ENCODE measurements at regions of chr10 and their contacts with region 1.

Region 1: DNA sequence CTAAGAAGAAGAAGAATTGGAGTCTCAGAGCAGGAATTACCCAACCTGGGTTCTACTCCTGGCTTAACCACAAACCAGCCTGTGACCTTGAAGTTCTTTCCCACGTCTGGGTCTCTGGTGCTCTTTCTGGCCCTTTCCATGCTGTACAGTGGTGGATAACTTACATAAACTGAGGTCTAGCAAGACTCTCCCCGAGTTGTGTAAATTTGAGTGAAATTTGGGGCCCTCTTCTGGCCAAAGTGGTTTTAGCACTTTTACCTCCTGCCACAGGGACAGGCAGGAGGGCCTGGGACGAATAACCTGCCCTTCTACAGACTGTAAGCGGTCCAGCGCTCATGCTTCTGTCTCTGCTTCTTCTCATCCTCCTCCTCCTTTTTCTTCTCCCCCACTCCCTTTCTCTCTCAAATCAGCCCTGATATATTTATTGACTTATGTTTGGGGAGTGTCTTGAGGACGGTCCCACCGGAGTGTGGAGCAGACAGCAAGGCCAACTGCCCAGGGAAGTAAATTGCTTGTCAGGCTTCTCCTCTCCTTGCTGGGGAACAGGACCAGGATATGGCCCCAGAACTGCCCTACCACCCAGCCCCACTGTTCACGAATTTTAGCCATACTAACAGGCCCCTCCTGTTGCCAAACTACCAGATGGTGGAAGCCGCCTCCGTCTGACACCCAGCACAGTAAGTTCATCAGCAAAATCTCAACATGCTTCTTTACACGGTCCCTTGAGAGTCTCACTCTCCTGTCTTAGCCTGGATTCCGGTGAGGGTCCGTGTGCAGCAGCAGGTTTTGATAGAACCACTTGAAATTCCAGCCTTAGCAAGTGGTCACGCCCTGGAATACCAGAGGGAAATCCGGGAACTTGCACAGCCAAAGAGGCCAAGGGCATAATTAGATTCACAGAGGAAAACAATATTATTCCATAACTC is 4.0 kb upstream of the SH3PXD2A start:
- DNase-seq: peak; percentile 46 to 84
- H3K4me3 ChIP-seq: no peak overlapping the region
- H3K27ac ChIP-seq: no peak overlapping the region
- H3K4me1 ChIP-seq: peaks cover 0 to 6% (median 3%) of the 10 kb centered on the region in 4 experiments; a peak in 5 of 7 replicates
- H3K27me3 ChIP-seq: peaks cover 0 to 21% (median 15%) of the 10 kb centered on the region in 4 experiments; a peak in 5 of 7 replicates
- CTCF ChIP-seq: peak; percentile 39 to 77 (median 77)
- EP300 ChIP-seq: no peak
- POLR2A ChIP-seq: no peak
- RAD21 ChIP-seq: peak; percentile 73 to 84

Region 2: DNA sequence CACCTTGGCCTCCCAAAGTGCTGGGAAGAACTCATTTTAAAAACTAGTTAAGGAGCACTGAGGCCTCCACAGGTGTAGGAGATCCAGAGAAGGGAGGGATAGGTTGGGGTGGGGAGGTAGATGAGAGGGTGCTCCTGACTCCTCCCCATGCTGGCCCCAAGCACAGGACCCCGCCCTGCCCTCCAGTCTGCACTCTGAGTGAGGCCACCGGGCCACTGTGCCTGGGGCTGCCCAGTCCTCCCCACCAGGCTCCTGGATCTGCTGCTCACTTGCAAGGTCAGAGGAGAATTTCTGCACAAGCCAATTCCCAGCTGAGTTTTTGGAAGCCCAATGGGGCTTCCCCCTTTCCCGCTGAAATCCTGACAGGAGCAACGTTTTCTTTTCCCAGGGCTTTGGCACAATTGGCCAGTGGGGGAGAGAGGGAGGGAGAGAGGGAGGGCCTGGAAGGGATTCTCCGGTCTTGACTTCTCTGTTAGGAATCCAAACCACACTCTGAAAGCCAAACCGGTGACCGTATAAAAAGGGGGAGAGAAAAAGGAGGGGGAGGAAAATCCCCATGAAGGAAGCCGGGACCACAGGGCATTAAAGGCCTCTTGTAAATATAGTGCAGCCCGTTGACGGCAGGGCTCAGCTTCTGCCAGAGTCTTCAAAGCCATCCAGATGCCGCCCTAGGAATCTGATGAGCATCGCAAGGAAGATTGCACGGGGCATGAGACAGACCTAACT is 120.2 kb before region 1 on chr10:
- CTCF ChIA-PET with region 1: interaction called, 13 read pairs
- POLR2A ChIA-PET with region 1: interaction called, 4 read pairs
- DNase-seq: no peak
- H3K4me3 ChIP-seq: peak overlapping the region in 1 of 4 experiments; percentile 8; a peak in 2 of 8 replicates
- H3K27ac ChIP-seq: no peak overlapping the region
- H3K4me1 ChIP-seq: peaks cover 0 to 9% (median 2%) of the 10 kb centered on the region in 4 experiments; a peak in 3 of 7 replicates
- H3K27me3 ChIP-seq: no peaks in the 10 kb centered on the region
- CTCF ChIP-seq: no peak
- EP300 ChIP-seq: no peak
- POLR2A ChIP-seq: no peak
- RAD21 ChIP-seq: no peak

Region 3: GRCh38 chr10:103772096-103772845 is 87.2 kb before region 1 on chr10:
- CTCF ChIA-PET with region 1: interaction called, 16 read pairs
- POLR2A ChIA-PET with region 1: interaction called, 5 read pairs
- DNase-seq: peak; percentile 57 to 82
- H3K4me3 ChIP-seq: peak overlapping the region; percentile 26 to 64 (median 59)
- H3K27ac ChIP-seq: peak overlapping the region; percentile 16; the same call in 1 of the 2 replicates
- H3K4me1 ChIP-seq: peaks cover 0 to 11% (median 7%) of the 10 kb centered on the region in 4 experiments; a peak in 6 of 7 replicates
- H3K27me3 ChIP-seq: no peaks in the 10 kb centered on the region
- CTCF ChIP-seq: no peak
- EP300 ChIP-seq: peak in 1 of 2 experiments; percentile 76; a peak in 1 of 3 replicates
- POLR2A ChIP-seq: peak in 1 of 2 experiments; percentile 58; a peak in 2 of 3 replicates
- RAD21 ChIP-seq: no peak

Region 4: GRCh38 chr10:103870516-103870915 is 11.1 kb after region 1 on chr10:
- CTCF ChIA-PET with region 1: interaction called, 12 read pairs
- POLR2A ChIA-PET with region 1: no interaction called
- DNase-seq: no peak
- H3K4me3 ChIP-seq: no peak overlapping the region
- H3K27ac ChIP-seq: no peak overlapping the region
- H3K4me1 ChIP-seq: peaks cover 0 to 8% (median 1%) of the 10 kb centered on the region in 4 experiments; a peak in 1 of 7 replicates
- H3K27me3 ChIP-seq: no peaks in the 10 kb centered on the region
- CTCF ChIP-seq: no peak
- EP300 ChIP-seq: no peak
- POLR2A ChIP-seq: no peak
- RAD21 ChIP-seq: no peak

Region 5: GRCh38 chr10:103917326-103918052 is 58.1 kb after region 1 on chr10:
- CTCF ChIA-PET with region 1: no interaction called
- POLR2A ChIA-PET with region 1: no interaction called
- DNase-seq: no peak
- H3K4me3 ChIP-seq: peak overlapping the region; percentile 74 to 91 (median 81)
- H3K27ac ChIP-seq: peak overlapping the region; percentile 22; the same call in 1 of the 2 replicates
- H3K4me1 ChIP-seq: peaks cover 7 to 19% (median 11%) of the 10 kb centered on the region in 4 experiments
- H3K27me3 ChIP-seq: no peaks in the 10 kb centered on the region
- CTCF ChIP-seq: no peak
- EP300 ChIP-seq: no peak
- POLR2A ChIP-seq: no peak; a peak in 1 of 3 replicates
- RAD21 ChIP-seq: no peak